ENCODE measurements at regions of chr1 and their contacts with region 1.

Region 1: DNA sequence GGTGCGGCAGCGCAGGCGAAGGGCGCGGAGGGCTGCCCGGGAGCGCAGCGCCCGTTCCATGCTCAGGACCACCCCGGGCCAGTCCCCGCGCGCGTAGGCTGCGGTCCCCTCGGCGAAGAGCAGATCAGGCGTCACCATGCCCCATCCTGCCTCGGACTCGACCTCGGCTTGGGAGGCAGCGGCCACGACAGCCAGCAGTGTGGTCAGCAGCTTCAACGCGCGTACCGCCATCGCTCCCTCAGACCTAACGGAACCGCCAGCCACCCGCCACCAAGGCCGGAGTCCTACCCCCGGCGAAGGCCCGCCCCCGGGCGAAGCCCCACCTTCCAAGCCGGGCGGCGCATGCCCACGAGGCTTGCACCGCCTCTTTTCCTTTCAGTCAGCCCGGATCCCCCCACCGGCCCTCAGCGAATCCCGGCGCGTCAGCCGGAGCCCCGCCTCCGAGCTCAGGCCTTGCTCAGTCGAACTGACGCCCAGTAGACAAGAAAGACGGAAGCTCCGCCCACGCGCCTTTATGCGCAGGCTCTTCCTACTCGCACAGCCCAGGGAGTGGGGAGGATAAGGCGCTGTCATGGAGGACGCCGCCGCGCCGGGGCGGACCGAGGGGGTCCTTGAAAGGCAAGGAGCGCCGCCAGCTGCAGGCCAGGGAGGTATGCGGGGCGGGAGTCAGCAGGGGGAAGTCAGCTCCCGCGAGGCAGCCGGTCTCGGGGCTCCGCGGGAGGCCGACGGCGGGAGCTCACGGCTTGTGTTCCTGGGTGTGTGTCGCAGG is at the starts of genes C1orf50 and P3H1:
- DNase-seq: peak; percentile 99
- H3K4me3 ChIP-seq: peak within 1 kb of the TSS; percentile 82
- H3K27ac ChIP-seq: peak within 1 kb of the TSS; percentile 52
- H3K4me1 ChIP-seq: peaks cover 27% of the 10 kb centered on the region
- CTCF ChIP-seq: 0 out of 2 replicates have a peak, but pooled peaks have one; percentile 7
- total RNA-seq, gene C1orf50: 2.0 and 3.2 TPM in 2 replicates
- total RNA-seq, gene P3H1: 39.0 and 43.8 TPM in 2 replicates

Region 2: GRCh38 chr1:41812051-41812450 is 954.9 kb before region 1 on chr1:
- CTCF ChIA-PET with region 1: no interaction called
- POLR2A ChIA-PET with region 1: no interaction called
- intact Hi-C with region 1: no loop called
- DNase-seq: peak; percentile 50
- H3K4me3 ChIP-seq: no peak overlapping the region
- H3K27ac ChIP-seq: no peak overlapping the region
- H3K4me1 ChIP-seq: no peaks in the 10 kb centered on the region
- CTCF ChIP-seq: peak; percentile 84

Region 3: DNA sequence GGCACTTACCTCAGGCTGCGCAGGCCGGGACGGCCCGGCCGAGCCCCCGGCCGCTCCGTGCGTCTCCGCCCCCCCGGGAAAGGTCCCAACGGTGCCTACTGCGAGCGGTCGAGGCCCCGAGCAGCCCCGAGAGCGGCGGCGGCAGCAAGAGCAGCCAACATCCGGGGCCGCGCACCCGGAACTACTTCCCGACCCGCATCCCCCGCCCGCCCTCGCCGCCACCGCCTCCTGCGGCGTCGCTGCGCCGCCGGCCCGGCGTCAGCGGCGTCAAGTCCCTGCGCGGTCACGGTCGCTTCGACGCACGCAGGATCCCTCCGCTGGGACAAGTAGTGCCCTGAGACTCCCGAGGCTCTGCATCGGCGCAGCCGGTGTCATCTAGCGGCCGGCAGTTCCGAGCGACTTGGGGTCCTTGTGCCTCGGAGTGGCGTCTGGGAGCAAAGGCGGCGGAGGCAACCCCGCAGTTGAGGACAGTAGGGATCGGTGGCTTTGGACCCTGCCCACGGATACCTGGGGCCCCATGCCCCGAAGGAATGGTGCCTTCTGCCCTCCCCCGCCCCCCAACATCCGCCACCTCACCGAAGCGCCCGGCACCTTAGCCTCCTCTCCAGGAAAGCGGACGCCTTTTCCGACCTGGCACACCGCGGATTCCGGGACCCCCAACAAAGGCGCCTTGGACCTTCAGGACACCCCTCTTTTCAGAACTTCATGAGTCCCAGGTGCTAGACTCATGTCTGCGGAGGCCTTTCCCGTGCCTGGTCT is 431.7 kb before region 1 on chr1 and contains the start of gene FOXJ3:
- CTCF ChIA-PET with region 1: no interaction called
- POLR2A ChIA-PET with region 1: no interaction called
- intact Hi-C with region 1: loop called (anchors 10 kb)
- DNase-seq: peak; percentile 98
- H3K4me3 ChIP-seq: peak within 1 kb of the TSS; percentile 97
- H3K27ac ChIP-seq: peak within 1 kb of the TSS; percentile 55
- H3K4me1 ChIP-seq: peaks cover 25% of the 10 kb centered on the region
- CTCF ChIP-seq: no peak
- total RNA-seq, gene FOXJ3: 27.6 and 34.8 TPM in 2 replicates

Region 4: GRCh38 chr1:42593486-42594100 is 173.3 kb before region 1 on chr1:
- CTCF ChIA-PET with region 1: no interaction called
- POLR2A ChIA-PET with region 1: no interaction called
- intact Hi-C with region 1: no loop called
- DNase-seq: no peak
- H3K4me3 ChIP-seq: no peak overlapping the region
- H3K27ac ChIP-seq: no peak overlapping the region
- H3K4me1 ChIP-seq: no peaks in the 10 kb centered on the region
- CTCF ChIP-seq: no peak

Region 5: DNA sequence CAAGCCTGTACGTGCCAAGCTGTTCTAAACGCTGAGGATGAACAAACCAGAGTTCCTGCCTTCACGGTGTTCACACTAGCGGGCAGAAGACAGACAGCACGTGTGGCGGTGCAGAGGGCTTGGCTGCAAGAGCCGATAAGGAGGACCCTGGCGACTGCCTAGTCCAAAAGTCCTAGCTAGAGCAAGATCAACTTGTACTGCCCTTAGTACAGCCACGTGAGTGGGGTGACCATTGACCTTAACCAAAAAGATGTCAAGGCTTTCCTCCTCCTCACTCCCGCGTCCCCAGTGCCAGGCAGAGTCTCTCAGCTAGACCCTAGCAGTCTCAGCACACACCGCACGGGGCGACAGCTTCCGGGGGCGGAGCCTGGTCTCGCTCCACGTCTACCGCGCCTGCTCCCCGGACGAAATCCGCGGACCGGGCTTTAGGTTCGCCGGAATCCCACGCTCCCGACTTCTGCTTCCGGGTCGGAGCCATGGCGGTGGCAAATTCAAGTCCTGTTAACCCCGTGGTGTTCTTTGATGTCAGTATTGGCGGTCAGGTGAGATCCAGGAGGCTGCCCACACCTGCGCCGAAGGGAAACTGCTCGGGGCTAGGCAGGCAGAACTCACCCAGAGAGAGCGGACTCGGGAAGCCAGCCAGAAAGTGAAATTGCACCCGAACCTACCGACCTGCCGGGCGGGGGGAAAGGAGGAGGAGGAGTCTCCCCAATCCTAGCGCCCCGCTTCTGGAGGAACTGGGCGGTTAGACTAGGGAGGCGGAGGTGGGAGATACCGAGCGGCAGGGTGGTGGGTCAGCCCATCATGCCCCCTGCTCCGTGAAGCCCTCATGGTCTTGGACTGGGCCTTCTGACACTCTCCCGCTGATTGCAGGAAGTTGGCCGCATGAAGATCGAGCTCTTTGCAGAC is 108.7 kb before region 1 on chr1 and contains the start of gene PPIH:
- CTCF ChIA-PET with region 1: no interaction called
- POLR2A ChIA-PET with region 1: interaction called, 8 read pairs
- intact Hi-C with region 1: loop called (anchors 1 kb)
- DNase-seq: peak; percentile 95
- H3K4me3 ChIP-seq: peak within 1 kb of the TSS; percentile 87
- H3K27ac ChIP-seq: peak within 1 kb of the TSS; percentile 56
- H3K4me1 ChIP-seq: peaks cover 28% of the 10 kb centered on the region
- CTCF ChIP-seq: 0 out of 2 replicates have a peak, but pooled peaks have one; percentile 18
- total RNA-seq, gene PPIH: 74.4 and 95.7 TPM in 2 replicates

Region 6: DNA sequence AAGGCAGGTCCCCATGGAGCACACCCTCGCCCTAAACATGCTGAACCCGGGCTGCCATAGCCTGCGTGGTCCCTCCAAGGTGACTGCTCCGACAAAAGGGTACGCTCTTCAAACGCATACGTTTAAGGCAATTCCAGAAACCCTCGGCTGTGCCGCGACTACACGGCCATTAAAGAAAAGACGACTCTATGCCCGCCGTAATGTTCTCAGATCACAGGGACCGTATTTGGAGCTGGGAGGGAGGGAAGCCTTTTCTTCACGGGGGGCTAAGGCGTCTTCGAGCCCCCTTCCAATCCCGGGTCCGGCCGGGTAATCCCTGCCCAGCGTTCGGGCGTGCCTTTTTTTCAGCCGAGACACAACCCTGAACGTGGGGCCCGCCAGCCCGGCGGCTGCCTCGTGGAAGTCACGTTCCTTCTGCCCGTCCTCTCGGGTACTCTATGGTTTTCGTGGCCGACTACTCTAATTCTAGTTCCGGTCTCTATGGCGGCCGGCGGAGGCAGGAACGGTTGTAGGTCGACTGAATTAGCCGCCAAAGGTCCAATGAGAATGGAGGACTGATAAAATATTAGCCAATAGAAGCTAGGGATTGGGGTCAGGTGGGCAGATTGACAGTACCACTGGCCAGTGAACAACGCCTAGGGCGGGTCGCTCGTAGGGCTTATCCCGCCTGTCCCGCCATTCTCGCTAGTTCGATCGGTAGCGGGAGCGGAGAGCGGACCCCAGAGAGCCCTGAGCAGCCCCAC is 85.0 kb before region 1 on chr1 and contains the start of gene YBX1:
- CTCF ChIA-PET with region 1: no interaction called
- POLR2A ChIA-PET with region 1: interaction called, 3 read pairs
- intact Hi-C with region 1: loop called (anchors 2 kb)
- DNase-seq: peak; percentile 99
- H3K4me3 ChIP-seq: peak within 1 kb of the TSS; percentile 84
- H3K27ac ChIP-seq: peak within 1 kb of the TSS; percentile 63
- H3K4me1 ChIP-seq: peaks cover 47% of the 10 kb centered on the region
- CTCF ChIP-seq: no peak
- total RNA-seq, gene YBX1: 750 and 887 TPM in 2 replicates

Region 7: GRCh38 chr1:42736150-42736850 is 30.6 kb before region 1 on chr1:
- CTCF ChIA-PET with region 1: no interaction called
- POLR2A ChIA-PET with region 1: no interaction called
- intact Hi-C with region 1: no loop called
- DNase-seq: peak; percentile 13
- H3K4me3 ChIP-seq: no peak overlapping the region
- H3K27ac ChIP-seq: no peak overlapping the region
- H3K4me1 ChIP-seq: peaks cover 11% of the 10 kb centered on the region
- CTCF ChIP-seq: peak; percentile 25; the same call in 1 of the 2 replicates

Region 8: GRCh38 chr1:42816585-42817434 is 49.9 kb after region 1 on chr1 and contains the starts of genes ERMAP and SVBP:
- CTCF ChIA-PET with region 1: no interaction called
- POLR2A ChIA-PET with region 1: interaction called, 11 read pairs
- intact Hi-C with region 1: no loop called
- DNase-seq: peak; percentile 93
- H3K4me3 ChIP-seq: peak within 1 kb of the TSS; percentile 84
- H3K27ac ChIP-seq: peak within 1 kb of the TSS; percentile 57
- H3K4me1 ChIP-seq: peaks cover 21% of the 10 kb centered on the region
- CTCF ChIP-seq: no peak; the same call in 1 of the 2 replicates
- total RNA-seq, gene ERMAP: 2.3 and 2.7 TPM in 2 replicates
- total RNA-seq, gene SVBP: 23.1 and 32.3 TPM in 2 replicates

Region 9: DNA sequence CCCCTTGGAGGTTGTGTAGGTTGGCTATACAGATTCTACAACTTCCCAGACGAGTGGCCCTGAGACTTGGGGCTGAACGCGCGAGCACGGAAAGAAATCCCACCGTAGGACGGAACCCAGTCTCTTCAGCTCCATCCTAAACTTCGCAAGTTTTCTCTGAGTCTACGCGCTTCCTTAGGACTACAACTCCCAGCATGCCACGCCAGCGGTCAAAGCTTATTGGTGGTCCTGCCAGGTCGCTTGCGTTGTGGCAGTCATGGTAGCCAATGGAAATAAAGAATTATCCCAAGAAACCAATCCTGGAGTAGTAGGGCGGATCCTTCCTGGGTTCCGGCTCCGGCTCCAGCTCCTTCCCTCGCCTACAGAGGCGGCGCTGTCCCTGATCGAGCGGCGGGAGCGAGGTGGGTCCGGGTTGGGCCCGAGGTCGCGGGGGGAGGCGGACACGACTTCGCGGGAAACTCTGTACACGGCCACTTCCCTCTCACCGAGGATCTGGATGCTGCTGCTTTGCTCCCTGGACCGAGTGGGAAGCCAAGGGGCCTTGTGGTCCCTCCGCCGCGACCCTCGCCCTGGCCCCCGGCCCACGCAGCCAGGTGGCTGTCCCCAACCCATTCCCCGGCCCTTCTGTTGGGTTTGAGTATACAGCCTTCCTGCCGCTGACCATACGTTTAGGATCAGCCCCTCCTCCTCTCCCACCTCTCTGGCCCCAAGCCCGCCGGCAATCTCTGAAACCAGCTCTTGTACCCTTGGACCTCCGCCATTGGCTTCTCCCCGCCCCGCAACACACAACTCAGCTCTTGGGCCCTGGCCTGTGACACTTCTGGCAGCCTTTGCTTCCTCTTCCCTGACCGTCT is 79.6 kb after region 1 on chr1 and contains the start of gene ZNF691:
- CTCF ChIA-PET with region 1: interaction called, 9 read pairs
- POLR2A ChIA-PET with region 1: interaction called, 35 read pairs
- intact Hi-C with region 1: no loop called
- DNase-seq: peak; percentile 97
- H3K4me3 ChIP-seq: peak within 1 kb of the TSS; percentile 89
- H3K27ac ChIP-seq: peak within 1 kb of the TSS; percentile 73
- H3K4me1 ChIP-seq: peaks cover 48% of the 10 kb centered on the region
- CTCF ChIP-seq: peak; percentile 59
- total RNA-seq, gene ZNF691: 14.1 and 17.8 TPM in 2 replicates

Region 10: DNA sequence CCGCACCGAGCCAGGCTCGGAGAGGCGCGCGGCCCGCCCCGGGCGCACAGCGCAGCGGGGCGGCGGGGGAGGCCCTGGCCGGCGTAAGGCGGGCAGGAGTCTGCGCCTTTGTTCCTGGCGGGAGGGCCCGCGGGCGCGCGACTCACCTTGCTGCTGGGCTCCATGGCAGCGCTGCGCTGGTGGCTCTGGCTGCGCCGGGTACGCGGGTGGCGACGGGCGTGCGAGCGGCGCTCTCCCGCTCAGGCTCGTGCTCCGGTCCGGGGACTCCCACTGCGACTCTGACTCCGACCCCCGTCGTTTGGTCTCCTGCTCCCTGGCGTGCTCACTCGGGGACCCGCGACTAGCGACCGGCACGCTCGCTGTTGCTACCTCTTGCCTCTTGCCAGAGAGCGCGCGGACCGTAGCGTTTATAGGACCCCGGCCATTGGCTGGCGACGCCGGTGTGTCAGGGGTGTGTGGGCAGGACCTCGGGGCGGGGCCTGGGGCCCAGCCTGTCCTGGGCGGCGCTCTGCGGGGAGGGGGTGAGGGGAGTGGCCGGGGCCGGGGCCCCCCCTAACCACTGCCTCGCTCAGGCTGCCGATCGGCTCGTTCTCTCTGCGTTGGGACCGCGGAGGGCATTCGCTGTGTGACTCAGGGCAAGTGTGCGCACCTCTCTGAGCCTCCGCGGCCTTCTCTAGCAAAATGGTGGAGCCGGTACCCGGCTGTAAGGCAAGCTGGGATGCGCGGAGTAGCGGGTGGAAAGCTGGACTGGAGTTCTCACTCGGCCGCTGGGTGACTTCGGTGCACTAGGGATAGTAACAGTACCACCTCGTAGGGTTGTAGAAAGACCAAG is 191.8 kb after region 1 on chr1 and contains the start of gene SLC2A1:
- CTCF ChIA-PET with region 1: no interaction called
- POLR2A ChIA-PET with region 1: interaction called, 6 read pairs
- intact Hi-C with region 1: loop called (anchors 5 kb)
- DNase-seq: peak; percentile 96
- H3K4me3 ChIP-seq: peak within 1 kb of the TSS; percentile 91
- H3K27ac ChIP-seq: peak within 1 kb of the TSS; percentile 66
- H3K4me1 ChIP-seq: peaks cover 72% of the 10 kb centered on the region
- CTCF ChIP-seq: no peak
- total RNA-seq, gene SLC2A1: 45.7 and 66.6 TPM in 2 replicates

Region 11: GRCh38 chr1:42993631-42994121 is 226.8 kb after region 1 on chr1:
- CTCF ChIA-PET with region 1: no interaction called
- POLR2A ChIA-PET with region 1: no interaction called
- intact Hi-C with region 1: no loop called
- DNase-seq: no peak
- H3K4me3 ChIP-seq: no peak overlapping the region
- H3K27ac ChIP-seq: no peak overlapping the region
- H3K4me1 ChIP-seq: no peaks in the 10 kb centered on the region
- CTCF ChIP-seq: no peak

Measured in OCI-LY7 (cell line).